ENCODE measurements at regions of chr9 and their contacts with region 1.

Region 1: GRCh38 chr9:98796364-98797101 is at the start of gene ANKS6:
- DNase-seq: peak; percentile 71 to 87
- ATAC-seq: peak; percentile 81 to 95
- H3K4me3 ChIP-seq: peak within 1 kb of the TSS; percentile 68
- H3K27ac ChIP-seq: peak within 1 kb of the TSS; percentile 70 to 94
- H3K4me1 ChIP-seq: peaks cover 14% of the 10 kb centered on the region; the same call in 2 of the 3 replicates
- CTCF ChIP-seq: peak; percentile 78
- EP300 ChIP-seq: no peak
- POLR2A ChIP-seq: peak; percentile 75
- RAD21 ChIP-seq: no peak
- polyA plus RNA-seq, gene ANKS6: 15.2 and 17.7 TPM in 2 replicates

Region 2: DNA sequence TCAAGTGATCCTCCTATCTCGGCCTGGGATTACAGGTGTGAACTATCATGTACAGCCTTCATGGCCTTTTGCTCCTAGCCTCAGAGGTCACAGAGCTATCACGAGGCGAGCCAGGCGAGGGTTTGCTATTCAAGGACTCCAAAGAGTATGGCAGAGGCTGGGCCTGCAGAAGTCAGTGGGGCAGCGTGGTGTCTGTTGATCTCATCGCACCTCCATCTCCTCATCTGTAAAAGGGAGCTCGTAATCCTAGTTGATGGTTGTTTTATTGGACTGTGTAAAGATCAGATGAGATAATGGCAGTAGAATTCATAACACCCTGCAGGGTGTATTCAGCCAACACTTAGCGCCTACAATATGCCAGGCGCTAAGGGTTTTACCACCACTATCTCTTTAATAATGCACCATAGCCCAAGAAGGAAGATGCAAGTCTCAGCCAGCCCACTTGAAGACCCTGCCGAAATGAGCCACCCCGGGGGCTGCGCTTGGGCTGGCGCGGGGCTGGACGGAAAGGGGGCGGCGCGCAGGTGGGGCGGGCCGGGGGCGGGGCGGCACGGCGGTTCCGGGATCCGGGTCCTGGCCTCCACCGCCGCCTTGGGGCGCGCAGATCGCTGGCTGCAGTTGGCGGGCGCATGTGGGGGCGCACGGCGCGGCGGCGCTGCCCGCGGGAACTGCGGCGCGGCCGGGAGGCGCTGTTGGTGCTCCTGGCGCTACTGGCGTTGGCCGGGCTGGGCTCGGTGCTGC is 10.7 kb after region 1 on chr9 and contains the start of gene GALNT12:
- CTCF ChIA-PET with region 1: interaction called, 41 read pairs
- POLR2A ChIA-PET with region 1: no interaction called
- DNase-seq: peak; percentile 36 to 52
- ATAC-seq: peak; percentile 80 to 83
- H3K4me3 ChIP-seq: peak within 1 kb of the TSS; percentile 75
- H3K27ac ChIP-seq: peak within 1 kb of the TSS; percentile 78 to 93
- H3K4me1 ChIP-seq: peaks cover 24% of the 10 kb centered on the region
- CTCF ChIP-seq: no peak; the same call in 1 of the 3 replicates
- EP300 ChIP-seq: no peak
- POLR2A ChIP-seq: peak; percentile 94
- RAD21 ChIP-seq: no peak
- polyA plus RNA-seq, gene GALNT12: 7.3 and 7.7 TPM in 2 replicates